MCF 10A (cell line): ENCODE measurements at regions of chr1 and their contacts with region 1.

Region 1: DNA sequence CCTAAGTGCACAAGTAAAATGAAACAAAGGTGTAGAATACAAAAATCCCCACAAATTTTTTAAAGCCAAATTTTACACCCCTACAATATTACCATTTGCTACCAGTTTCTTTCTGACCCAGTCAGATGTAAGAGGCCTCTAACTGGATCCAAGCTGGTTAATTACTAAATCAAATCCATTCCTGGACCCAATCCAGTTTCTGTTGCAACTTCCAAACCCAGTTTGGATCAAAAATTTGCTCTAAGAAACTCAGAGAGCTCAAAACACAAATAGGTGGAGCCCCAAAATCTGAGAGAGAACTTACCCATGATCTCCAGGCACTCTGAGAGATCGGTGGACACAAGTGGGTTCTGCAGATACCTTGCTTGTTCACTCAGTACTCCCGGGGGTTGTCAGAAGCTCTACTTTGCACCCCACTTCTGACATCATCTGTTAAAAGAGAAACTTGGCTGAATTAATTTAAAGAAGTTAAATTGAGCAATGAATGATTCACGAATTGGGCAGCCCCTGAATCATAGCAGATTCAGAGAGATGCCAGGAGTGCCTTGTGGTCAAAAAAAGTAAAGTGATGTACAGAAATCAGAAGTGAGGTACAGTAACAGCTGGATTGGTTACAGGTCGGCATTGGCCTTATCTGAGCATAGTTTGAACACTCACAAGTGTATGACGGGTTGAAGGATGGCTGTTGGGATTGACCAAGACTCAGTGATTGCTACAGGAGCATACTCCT is 448.0 kb downstream of the KCNT2 start:
- DNase-seq: peak; percentile 95
- H3K4me3 Mint-ChIP-seq: peak overlapping the region; percentile 57
- H3K27ac Mint-ChIP-seq: peak overlapping the region; percentile 89
- H3K4me1 Mint-ChIP-seq: peaks cover 14% of the 10 kb centered on the region
- H3K27me3 Mint-ChIP-seq: no peaks in the 10 kb centered on the region
- CTCF ChIP-seq: no peak

Region 2: GRCh38 chr1:195915826-195916225 is 244.4 kb before region 1 on chr1:
- CTCF ChIA-PET with region 1: no interaction called
- POLR2A ChIA-PET with region 1: no interaction called
- intact Hi-C with region 1: no loop called
- DNase-seq: no peak
- H3K4me3 Mint-ChIP-seq: no peak overlapping the region
- H3K27ac Mint-ChIP-seq: no peak overlapping the region
- H3K4me1 Mint-ChIP-seq: no peaks in the 10 kb centered on the region
- H3K27me3 Mint-ChIP-seq: no peaks in the 10 kb centered on the region
- CTCF ChIP-seq: no peak

Region 3: DNA sequence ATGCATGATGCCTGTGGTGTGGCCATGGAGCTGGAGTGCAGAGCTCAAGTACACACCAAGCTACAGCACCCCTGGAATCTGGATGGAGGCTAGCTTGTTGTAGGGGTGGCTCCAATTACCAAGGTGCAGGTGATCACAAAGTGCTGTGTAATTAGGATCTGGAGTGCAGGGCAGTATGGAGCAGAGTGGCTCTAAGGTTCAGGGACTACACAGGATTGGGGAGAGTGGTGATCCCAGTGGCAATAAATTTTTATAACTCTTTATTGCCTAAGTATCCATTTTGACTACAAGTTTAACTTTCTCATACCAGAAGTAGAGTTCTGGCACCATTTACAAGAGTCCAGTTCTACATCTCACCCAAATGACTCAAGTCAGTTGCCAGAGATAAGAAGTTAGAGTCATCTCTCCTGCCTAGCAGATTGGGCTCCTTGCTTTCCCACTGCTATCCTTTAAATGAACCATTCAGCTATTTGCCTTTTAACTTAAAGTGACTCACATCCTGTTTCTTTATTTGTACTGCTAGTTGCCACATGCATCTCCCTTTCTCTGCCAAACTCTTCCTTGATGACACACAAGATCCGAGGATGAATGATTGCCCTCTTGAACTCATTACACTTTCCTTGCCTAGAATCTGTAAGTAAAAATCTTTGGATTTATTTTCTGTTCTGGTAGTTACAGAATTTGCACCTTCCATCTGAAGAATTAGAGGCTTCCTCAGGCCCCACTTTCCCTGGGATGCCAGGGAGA is 20.8 kb after region 1 on chr1:
- CTCF ChIA-PET with region 1: interaction called, 3 read pairs
- POLR2A ChIA-PET with region 1: interaction called, 22 read pairs
- intact Hi-C with region 1: loop called (anchors 1 kb)
- DNase-seq: peak; percentile 98
- H3K4me3 Mint-ChIP-seq: no peak overlapping the region
- H3K27ac Mint-ChIP-seq: peak overlapping the region; percentile 68
- H3K4me1 Mint-ChIP-seq: peaks cover 21% of the 10 kb centered on the region
- H3K27me3 Mint-ChIP-seq: no peaks in the 10 kb centered on the region
- CTCF ChIP-seq: no peak